Prostate gland (tissue), 2 donors: ENCODE measurements at regions of chr17 and their contacts with region 1.

Region 1: DNA sequence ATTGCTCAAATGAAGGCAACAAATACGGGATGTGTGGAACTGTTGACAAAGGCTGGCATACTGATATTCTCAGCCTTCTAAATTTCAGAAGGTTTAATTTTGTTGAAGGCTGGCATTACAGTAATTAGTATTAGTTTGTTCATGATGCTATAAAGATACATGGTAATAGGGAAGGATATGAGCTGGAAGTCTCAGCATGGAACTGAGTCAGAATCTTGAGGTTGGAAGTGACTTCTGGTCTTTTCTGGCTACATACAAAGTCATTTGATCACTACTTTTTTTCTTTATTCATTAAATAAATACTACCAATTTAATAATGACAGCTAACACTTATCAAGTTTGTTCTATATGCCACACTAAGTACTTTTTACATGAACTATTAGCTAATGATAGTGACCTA is 22.6 kb downstream of the RABEP1 start:
- DNase-seq: no peak
- H3K4me3 ChIP-seq: no peak overlapping the region
- H3K27ac ChIP-seq: no peak overlapping the region
- H3K4me1 ChIP-seq: peaks cover 10% of the 10 kb centered on the region
- H3K27me3 ChIP-seq: no peaks in the 10 kb centered on the region
- CTCF ChIP-seq: no peak
- POLR2A ChIP-seq: no peak

Region 2: DNA sequence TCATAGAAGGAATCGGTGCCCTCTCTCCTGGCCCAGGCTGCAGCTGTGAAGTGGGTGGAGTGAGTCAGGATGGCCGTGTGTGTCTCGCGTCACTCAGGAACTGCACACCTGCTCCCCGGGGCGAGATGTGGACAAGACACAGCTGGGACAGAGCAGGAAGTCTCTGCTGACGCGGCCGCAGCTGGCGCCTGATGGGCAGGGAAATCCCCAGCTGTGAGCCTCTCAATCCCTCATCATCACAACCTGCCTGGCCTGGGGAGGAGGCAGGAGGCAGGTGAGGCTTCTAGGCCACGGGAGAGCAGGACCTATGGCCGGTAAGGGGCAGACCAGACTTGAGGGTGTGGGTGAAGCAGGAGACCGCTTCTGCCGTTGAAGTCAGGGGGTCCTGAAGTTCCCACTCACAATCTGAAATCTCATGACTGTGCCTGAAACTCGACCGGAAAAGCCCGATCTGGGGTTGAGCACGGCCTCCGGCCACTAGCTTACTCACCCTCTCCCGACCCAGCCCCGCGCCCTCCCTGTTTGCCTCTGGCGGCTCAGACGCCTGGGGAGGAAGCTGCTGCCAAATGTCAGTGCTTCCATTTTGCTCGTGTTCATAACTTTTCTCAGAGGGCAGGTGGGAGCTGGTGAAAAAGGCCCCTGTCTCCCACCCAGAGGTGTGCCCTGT is 1745.9 kb before region 1 on chr17:
- intact Hi-C with region 1: loop called (anchors 5 kb)
- DNase-seq: no peak
- H3K4me3 ChIP-seq: no peak overlapping the region
- H3K27ac ChIP-seq: no peak overlapping the region
- H3K4me1 ChIP-seq: no peaks in the 10 kb centered on the region
- H3K27me3 ChIP-seq: no peaks in the 10 kb centered on the region
- CTCF ChIP-seq: no peak
- POLR2A ChIP-seq: no peak